ENCODE measurements at regions of chr4 and their contacts with region 1.

Region 1: DNA sequence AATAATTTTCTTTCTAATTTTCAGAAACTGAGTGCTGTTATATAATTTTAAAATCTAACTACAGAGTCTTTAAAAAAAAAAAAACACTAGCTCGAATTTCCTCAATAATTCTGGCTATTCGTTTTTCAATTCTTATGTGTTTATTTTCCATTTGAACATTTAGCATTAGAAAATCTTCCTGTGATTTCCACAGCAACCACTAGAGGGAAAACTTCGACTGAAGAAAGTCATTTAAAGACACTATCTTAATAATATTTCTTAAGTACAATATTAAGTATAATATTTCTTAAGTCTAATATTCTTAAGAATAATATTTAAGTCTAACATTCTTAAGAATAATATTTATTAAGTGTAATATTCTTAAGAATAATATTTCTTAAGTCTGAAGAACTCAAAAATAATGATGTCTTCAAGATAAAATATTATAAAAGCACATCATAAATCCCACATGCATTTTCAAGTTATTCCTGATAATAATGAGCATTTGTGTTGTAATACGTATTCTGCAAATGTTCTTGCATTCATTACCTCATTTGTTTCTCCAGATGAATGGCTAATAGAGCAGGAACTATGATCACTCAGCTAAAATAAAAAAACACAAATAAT is 118.4 kb upstream of the WDR17 start:
- DNase-seq: peak; percentile 51
- H3K4me3 ChIP-seq: no peak overlapping the region
- H3K27ac ChIP-seq: no peak overlapping the region
- H3K4me1 ChIP-seq: peaks cover 7% of the 10 kb centered on the region
- CTCF ChIP-seq: peak; percentile 90

Region 2: GRCh38 chr4:175560604-175561003 is 386.6 kb before region 1 on chr4:
- CTCF ChIA-PET with region 1: no interaction called
- POLR2A ChIA-PET with region 1: interaction called, 4 read pairs
- intact Hi-C with region 1: loop called (anchors 2 kb)
- DNase-seq: peak; percentile 58
- H3K4me3 ChIP-seq: no peak overlapping the region
- H3K27ac ChIP-seq: no peak overlapping the region
- H3K4me1 ChIP-seq: peaks cover 8% of the 10 kb centered on the region
- CTCF ChIP-seq: peak; percentile 77

Region 3: DNA sequence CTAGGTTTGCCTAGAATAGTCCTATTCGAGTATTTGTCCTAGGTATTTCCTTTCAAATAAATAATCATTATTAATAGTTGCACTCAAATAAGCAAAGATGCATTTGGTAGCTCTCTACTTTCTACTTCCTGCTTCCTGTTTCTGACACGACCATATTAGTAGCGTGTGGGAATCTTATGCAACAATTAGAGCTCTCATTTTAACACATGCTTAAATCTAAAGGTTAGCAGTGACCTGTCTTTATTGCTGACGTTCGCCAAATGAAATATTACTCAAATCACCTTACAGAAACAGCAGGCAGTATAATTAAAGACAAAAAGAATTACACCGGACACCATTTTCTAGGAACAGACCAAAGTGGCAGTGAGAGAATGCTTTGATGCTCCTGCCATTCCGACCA is 23.2 kb before region 1 on chr4:
- CTCF ChIA-PET with region 1: no interaction called
- POLR2A ChIA-PET with region 1: no interaction called
- intact Hi-C with region 1: no loop called
- DNase-seq: no peak
- H3K4me3 ChIP-seq: no peak overlapping the region
- H3K27ac ChIP-seq: no peak overlapping the region
- H3K4me1 ChIP-seq: no peaks in the 10 kb centered on the region
- CTCF ChIP-seq: no peak

Region 4: GRCh38 chr4:176013476-176014247 is 66.4 kb after region 1 on chr4:
- CTCF ChIA-PET with region 1: no interaction called
- POLR2A ChIA-PET with region 1: interaction called, 3 read pairs
- intact Hi-C with region 1: loop called (anchors 5 kb)
- DNase-seq: peak; percentile 79
- H3K4me3 ChIP-seq: peak overlapping the region; percentile 26
- H3K27ac ChIP-seq: peak overlapping the region; percentile 85
- H3K4me1 ChIP-seq: peaks cover 52% of the 10 kb centered on the region
- CTCF ChIP-seq: no peak

Region 5: DNA sequence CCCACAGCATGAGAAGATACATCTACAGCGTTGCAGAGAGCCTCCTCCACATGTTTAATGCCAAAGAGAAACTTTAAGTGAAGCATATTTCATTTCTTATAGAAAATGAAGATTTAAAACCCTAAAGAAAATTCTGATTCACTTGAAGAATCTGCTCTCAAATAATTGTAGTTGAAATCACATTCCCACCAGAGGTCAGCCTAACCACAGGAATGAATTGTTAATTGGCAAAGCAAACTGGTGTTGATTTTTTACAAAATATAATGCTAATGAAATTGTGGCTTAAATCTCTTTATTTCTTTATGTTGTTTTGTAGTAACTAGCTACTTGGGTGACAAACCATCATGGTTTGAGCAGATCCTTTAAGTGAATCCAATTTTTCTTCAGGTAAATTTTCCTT is 87.3 kb after region 1 on chr4:
- CTCF ChIA-PET with region 1: no interaction called
- POLR2A ChIA-PET with region 1: no interaction called
- intact Hi-C with region 1: no loop called
- DNase-seq: peak; percentile 35
- H3K4me3 ChIP-seq: no peak overlapping the region
- H3K27ac ChIP-seq: no peak overlapping the region
- H3K4me1 ChIP-seq: peaks cover 4% of the 10 kb centered on the region
- CTCF ChIP-seq: peak; percentile 73

Region 6: GRCh38 chr4:176123710-176124407 is 176.6 kb after region 1 on chr4:
- CTCF ChIA-PET with region 1: no interaction called
- POLR2A ChIA-PET with region 1: interaction called, 3 read pairs
- intact Hi-C with region 1: loop called (anchors 5 kb)
- DNase-seq: peak; percentile 25
- H3K4me3 ChIP-seq: no peak overlapping the region
- H3K27ac ChIP-seq: no peak overlapping the region
- H3K4me1 ChIP-seq: peaks cover 3% of the 10 kb centered on the region
- CTCF ChIP-seq: peak; percentile 75

Region 7: GRCh38 chr4:176277162-176277904 is 330.1 kb after region 1 on chr4:
- CTCF ChIA-PET with region 1: no interaction called
- POLR2A ChIA-PET with region 1: no interaction called
- intact Hi-C with region 1: loop called (anchors 5 kb)
- DNase-seq: peak; percentile 51
- H3K4me3 ChIP-seq: no peak overlapping the region
- H3K27ac ChIP-seq: no peak overlapping the region
- H3K4me1 ChIP-seq: no peaks in the 10 kb centered on the region
- CTCF ChIP-seq: peak; percentile 74

Measured in OCI-LY7 (cell line).